ENCODE measurements at regions of chr2 and their contacts with region 1.

Region 1: GRCh38 chr2:226984750-226985582 is 149.1 kb downstream of the RHBDD1 start:
- DNase-seq: peak; percentile 64
- ATAC-seq: peak; percentile 95
- H3K4me3 Mint-ChIP-seq: no peak overlapping the region
- H3K27ac Mint-ChIP-seq: peak overlapping the region; percentile 76
- H3K4me1 Mint-ChIP-seq: peaks cover 35% of the 10 kb centered on the region
- H3K27me3 Mint-ChIP-seq: no peaks in the 10 kb centered on the region

Region 2: GRCh38 chr2:226835796-226836547 is 149.0 kb before region 1 on chr2 and contains the start of gene RHBDD1:
- CTCF ChIA-PET with region 1: interaction called, 8 read pairs
- POLR2A ChIA-PET with region 1: interaction called, 11 read pairs
- DNase-seq: peak; percentile 96
- ATAC-seq: peak; percentile 90
- H3K4me3 Mint-ChIP-seq: peak within 1 kb of the TSS; percentile 88
- H3K27ac Mint-ChIP-seq: peak within 1 kb of the TSS; percentile 99
- H3K4me1 Mint-ChIP-seq: peaks cover 62% of the 10 kb centered on the region
- H3K27me3 Mint-ChIP-seq: no peaks in the 10 kb centered on the region
- total RNA-seq, gene RHBDD1: 23.4 to 29.5 TPM

Region 3: DNA sequence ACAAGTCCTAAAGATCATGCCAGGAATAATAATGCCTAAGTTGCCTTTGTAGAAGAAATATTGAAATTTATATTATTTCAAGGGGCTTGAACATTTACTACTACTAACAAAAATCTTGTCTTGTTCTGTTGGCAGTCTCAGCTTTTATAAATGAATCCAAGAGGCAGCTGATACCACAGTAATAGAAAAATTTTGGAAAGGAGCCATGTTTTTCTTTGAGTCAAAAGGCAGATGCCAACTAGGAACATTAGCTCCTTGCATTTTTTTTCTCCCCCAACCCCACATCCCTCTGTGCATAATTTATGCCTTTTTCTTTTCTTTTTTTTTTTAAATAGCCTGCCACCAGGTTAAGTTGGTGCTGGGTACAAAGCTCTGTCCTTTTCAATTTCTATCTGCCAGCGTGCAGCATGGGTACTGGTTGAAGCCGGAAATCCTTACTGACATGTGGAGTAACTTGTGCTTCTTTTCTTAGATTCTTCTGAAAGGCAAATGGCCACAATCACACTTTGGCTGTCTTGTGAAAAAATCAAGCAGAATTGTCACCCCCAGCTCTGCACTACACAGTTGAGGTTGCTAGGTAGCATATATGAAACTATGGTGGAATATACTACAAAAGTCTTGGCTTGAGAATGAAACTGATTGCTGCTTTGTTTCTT is 50.3 kb before region 1 on chr2:
- CTCF ChIA-PET with region 1: no interaction called
- POLR2A ChIA-PET with region 1: no interaction called
- DNase-seq: no peak
- ATAC-seq: no peak
- H3K4me3 Mint-ChIP-seq: no peak overlapping the region
- H3K27ac Mint-ChIP-seq: no peak overlapping the region
- H3K4me1 Mint-ChIP-seq: no peaks in the 10 kb centered on the region
- H3K27me3 Mint-ChIP-seq: no peaks in the 10 kb centered on the region

Measured in activated CD8-positive, alpha-beta T cell treated with anti-CD3 and anti-CD28 coated beads, Interleukin-2, amount 10 ng/mL, durations not matched to agents 7 days and 5 days (primary cell).